ENCODE measurements at regions of chr13 and their contacts with region 1.

Region 1: GRCh38 chr13:20127577-20128466 is 33.0 kb downstream of the GJA3 start:
- DNase-seq: peak; percentile 58
- ATAC-seq: peak; percentile 75
- H3K4me3 Mint-ChIP-seq: peak overlapping the region; percentile 65
- H3K27ac Mint-ChIP-seq: no peak overlapping the region
- H3K4me1 Mint-ChIP-seq: no peaks in the 10 kb centered on the region
- H3K27me3 Mint-ChIP-seq: peaks cover 16% of the 10 kb centered on the region
- CTCF ChIP-seq: peak; percentile 30

Region 2: DNA sequence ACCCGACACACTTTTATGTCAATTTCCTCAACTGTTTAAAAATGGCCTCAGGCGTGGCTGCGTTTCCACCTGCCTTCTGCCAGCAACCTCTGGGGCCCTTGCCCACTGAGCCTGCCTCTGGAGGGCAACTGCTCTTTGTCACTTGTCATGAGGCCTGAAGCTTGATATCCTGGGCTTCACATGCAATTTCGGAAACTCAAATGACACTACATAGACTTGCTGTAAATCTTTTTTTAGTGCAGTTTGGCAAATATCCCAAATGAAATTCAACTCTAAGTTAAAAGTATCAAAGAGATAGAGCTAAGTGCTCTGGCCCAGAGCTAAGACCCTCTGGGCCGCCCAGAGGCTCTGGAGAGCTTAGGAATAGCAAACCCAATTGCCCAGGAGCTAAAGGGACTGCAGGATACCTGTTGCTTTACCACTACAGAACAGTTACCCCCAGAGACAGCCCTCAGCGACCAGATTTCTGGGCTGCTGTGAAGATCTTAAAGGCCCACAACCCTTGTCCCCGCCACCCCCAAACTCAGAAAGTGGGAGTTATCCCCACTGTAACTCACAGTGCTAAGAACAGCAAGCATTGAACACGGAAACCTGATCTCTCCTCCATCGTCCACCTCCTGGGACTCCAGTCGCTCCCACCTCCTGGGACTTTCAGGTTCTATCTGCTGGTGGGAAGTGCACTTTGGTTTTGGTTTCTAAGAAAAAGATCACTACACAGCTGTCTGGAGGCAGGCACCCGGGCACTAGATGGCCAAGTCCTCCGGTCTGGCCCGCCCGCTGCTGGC is 13.6 kb after region 1 on chr13:
- CTCF ChIA-PET with region 1: interaction called, 11 read pairs
- POLR2A ChIA-PET with region 1: interaction called, 4 read pairs
- intact Hi-C with region 1: no loop called
- DNase-seq: no peak
- ATAC-seq: no peak
- H3K4me3 Mint-ChIP-seq: no peak overlapping the region
- H3K27ac Mint-ChIP-seq: no peak overlapping the region
- H3K4me1 Mint-ChIP-seq: peaks cover 5% of the 10 kb centered on the region
- H3K27me3 Mint-ChIP-seq: peaks cover 62% of the 10 kb centered on the region
- CTCF ChIP-seq: no peak

Measured in activated CD8-positive, alpha-beta T cell treated with anti-CD3 and anti-CD28 coated beads for 36 hours (primary cell).